ENCODE measurements at regions of chr17 and their contacts with region 1.

Region 1: GRCh38 chr17:76278952-76279741 is 14.0 kb downstream of the UBALD2 start:
- DNase-seq: no peak
- ATAC-seq: peak; percentile 94
- H3K4me3 ChIP-seq: no peak overlapping the region
- H3K27ac ChIP-seq: no peak overlapping the region
- H3K4me1 ChIP-seq: peaks cover 11% of the 10 kb centered on the region
- H3K27me3 ChIP-seq: no peaks in the 10 kb centered on the region
- CTCF ChIP-seq: peak; percentile 99

Region 2: DNA sequence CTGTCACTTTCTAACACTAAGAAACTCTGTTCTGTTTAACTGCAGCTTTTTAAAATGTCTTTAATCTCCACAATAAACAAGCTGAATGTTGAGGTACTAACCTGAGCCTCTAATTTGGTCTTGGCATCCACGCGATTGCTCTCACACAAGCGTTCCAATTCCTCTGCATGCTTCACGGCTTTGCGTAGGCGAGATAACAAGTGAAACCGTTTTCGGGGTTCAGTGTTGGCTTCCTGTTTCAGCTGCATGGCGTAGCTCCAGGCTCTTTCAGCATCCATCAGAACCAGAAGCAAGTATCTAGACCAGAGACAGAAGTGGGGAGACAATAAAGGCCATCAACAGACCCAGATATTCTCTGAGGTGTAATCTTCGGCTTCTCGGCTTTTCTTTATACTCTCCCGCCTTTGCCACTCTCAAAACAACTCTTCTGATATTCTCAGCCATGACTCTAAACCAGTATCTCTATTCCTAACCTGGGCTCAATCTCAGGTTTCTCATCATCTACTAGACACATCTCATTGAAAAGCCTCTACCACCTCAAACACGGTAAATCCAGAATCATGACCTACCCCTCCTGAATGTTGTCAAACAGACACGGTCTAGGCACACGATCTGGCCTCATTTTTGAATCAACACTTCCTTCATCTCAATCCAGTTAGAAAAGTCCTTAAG is 215.1 kb before region 1 on chr17:
- CTCF ChIA-PET with region 1: no interaction called
- POLR2A ChIA-PET with region 1: no interaction called
- in situ Hi-C with region 1: no loop called
- intact Hi-C with region 1: no loop called
- DNase-seq: no peak
- ATAC-seq: no peak
- H3K4me3 ChIP-seq: no peak overlapping the region
- H3K27ac ChIP-seq: no peak overlapping the region
- H3K4me1 ChIP-seq: no peaks in the 10 kb centered on the region
- H3K27me3 ChIP-seq: no peaks in the 10 kb centered on the region
- CTCF ChIP-seq: no peak

Region 3: DNA sequence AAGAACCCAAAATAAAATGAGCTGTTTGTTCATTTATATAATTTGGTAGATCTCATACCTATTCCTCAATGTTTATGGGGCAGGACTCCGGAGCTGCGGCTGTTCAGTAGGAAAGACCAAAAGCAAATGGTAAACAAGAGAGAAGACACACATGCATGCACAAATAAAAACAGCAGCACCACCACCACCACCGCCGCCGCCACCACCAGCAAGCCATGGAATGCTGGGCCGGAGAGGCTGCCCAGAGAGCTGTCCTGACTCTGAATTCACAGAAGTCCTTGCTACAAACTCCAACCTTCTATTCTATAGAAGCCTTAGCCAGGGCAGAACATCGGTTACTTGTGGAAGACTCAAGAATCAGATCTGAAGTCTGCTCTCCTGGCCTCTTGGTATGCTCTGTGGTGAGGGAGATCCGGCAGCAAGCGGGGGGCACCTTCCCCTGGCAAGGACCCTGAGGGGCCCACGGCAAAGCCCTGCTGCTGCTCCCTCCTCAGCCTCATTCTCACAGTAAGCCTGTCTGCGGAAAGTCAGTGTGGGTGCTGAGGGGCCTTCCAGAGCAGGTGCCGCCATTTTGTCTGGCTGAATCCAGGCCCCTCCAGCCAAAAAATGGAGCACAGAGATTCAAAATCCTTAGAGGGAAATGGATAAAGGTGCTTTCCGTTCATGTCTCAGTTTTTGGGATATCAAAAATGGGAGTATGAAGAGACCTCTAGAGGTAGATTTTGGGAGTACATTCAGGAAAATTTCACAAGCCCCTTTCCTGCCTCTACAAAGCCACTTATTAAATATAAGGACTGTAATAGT is 131.7 kb before region 1 on chr17:
- CTCF ChIA-PET with region 1: no interaction called
- POLR2A ChIA-PET with region 1: no interaction called
- in situ Hi-C with region 1: no loop called
- intact Hi-C with region 1: no loop called
- DNase-seq: no peak
- ATAC-seq: no peak
- H3K4me3 ChIP-seq: no peak overlapping the region
- H3K27ac ChIP-seq: no peak overlapping the region
- H3K4me1 ChIP-seq: no peaks in the 10 kb centered on the region
- H3K27me3 ChIP-seq: no peaks in the 10 kb centered on the region
- CTCF ChIP-seq: no peak; the same call in 1 of the 2 replicates

Region 4: DNA sequence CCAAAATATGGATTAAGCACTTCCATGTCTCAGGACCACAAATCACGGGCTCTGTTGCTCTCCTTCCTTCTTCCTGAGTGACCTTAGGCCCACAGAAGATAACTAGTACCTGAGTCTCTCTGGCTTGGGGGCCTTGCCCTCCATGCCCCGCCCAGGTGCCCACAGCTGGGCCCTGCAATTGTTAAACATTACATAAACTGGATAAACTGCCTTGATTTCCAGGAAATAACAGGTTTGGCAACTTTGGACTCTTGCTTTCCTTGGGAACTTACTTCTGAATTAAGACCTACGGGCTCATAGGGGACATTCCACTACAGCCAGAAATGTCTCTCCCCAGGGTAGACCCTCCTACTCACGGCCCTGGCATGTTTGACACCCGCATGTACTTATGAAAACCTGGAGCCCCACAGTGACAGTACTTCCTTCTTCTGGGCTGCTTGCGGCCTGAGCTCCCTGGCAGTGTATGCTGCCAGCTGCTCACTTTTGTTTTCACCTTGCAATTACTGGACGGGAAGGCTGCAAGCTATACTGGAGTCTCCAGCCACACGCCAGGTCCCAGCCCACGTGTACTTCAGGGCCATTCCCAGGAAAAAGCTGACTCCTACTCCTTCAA is 16.3 kb before region 1 on chr17:
- CTCF ChIA-PET with region 1: interaction called, 11 read pairs
- POLR2A ChIA-PET with region 1: interaction called, 3 read pairs
- in situ Hi-C with region 1: no loop called
- intact Hi-C with region 1: no loop called
- DNase-seq: no peak
- ATAC-seq: no peak
- H3K4me3 ChIP-seq: no peak overlapping the region
- H3K27ac ChIP-seq: peak overlapping the region; percentile 92
- H3K4me1 ChIP-seq: peaks cover 32% of the 10 kb centered on the region
- H3K27me3 ChIP-seq: no peaks in the 10 kb centered on the region
- CTCF ChIP-seq: no peak

Region 5: DNA sequence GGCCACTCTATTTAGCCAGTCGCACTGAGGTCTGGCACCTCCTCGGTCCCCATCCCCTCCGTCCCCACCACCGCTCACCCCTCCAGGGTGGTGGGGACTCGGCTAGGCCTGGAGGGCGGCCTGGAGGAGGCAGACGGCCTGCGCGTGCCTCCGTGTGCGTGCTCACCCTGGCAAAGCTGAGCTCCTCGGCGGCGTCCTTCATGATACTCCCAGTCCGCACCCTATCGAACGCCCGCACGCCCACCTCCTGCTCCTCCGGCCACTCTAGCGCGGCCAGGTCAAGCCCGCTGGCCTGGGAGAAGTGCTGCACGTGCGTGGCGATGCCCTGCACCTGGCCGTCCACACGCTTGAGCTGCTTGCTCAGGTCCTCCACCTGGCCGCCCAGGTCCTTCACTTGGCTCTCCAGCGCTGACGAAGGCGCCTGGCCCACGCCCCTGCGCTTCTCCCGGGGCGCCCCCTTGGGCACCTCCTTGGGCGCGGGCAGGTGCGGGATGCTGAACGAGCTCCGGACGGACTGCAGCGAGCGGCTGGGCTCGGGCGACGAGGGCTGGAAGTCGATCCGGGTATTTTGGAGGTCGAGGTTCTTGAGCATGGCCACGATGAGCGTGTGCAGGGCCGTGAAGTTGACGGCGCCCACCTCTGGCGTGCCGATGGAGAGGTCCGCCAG is 28.3 kb after region 1 on chr17:
- CTCF ChIA-PET with region 1: interaction called, 11 read pairs
- POLR2A ChIA-PET with region 1: no interaction called
- in situ Hi-C with region 1: no loop called
- intact Hi-C with region 1: no loop called
- DNase-seq: no peak
- ATAC-seq: no peak
- H3K4me3 ChIP-seq: no peak overlapping the region
- H3K27ac ChIP-seq: no peak overlapping the region
- H3K4me1 ChIP-seq: peaks cover 5% of the 10 kb centered on the region; the same call in 1 of the 2 replicates
- H3K27me3 ChIP-seq: no peaks in the 10 kb centered on the region
- CTCF ChIP-seq: no peak

Region 6: DNA sequence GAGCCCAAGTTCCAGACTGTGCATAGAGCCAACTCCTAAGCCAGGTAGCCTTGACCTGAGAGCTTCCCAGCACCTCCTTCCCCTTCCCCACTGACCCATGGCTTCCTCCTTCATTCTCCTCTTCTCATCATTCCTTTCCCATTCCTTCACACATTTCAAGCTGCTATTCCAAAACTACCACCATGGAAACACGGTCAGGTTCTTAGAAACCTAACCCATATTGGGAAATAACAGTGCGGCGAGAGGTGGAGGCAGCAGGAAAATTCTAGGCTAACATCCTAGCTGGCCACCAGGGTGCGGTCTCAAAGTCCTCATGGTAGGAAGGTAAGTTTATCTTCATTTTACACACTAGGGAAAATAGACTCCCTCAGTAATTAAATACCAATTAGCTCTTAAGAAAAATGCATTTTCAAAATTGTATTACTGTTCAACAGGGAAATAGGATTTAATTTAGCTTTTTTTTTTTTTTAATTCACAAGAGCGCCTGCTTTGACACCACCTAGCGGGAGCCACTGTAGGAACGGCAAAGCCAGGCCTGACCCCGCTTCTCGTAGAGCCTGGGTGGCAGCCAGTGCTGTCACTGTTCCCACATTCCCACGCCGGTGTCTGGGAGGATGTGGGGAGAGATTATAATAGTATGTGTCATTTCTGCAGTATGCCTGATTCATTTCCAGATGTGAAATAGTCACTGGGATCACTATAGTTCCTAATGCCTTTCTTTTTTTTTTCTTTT is 91.3 kb after region 1 on chr17:
- CTCF ChIA-PET with region 1: interaction called, 10 read pairs
- POLR2A ChIA-PET with region 1: no interaction called
- in situ Hi-C with region 1: no loop called
- intact Hi-C with region 1: no loop called
- DNase-seq: no peak
- ATAC-seq: peak; percentile 78
- H3K4me3 ChIP-seq: no peak overlapping the region
- H3K27ac ChIP-seq: no peak overlapping the region
- H3K4me1 ChIP-seq: 0 out of 2 replicates have a peak, but pooled peaks cover 5% of the 10 kb centered on the region
- H3K27me3 ChIP-seq: no peaks in the 10 kb centered on the region
- CTCF ChIP-seq: peak; percentile 82